ENCODE measurements at regions of chr10 and their contacts with region 1.

Region 1: DNA sequence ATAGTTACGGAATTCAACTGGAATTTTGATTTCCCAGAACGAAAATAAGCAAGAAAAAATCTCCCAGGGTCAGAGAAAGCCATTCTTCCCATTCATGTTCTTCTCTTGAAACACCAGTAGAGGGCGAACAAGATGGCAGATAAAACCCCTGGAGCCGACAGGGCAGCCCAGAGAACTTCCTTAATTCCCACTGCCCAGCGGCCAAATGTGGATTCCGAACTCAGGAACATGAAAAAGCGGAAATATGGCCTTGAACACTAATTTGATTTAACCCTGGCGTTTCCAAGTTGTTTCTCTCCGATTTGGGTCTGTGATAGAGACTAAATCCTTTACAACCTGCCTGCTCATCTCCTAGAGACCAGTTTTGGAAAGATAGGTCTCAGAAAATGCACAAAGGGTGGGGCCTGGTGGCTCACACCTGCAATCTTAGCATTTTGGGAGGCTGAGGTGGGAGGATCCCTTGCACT is 100.7 kb upstream of the WAC start:
- DNase-seq: peak; percentile 64
- ATAC-seq: peak; percentile 78
- H3K4me3 ChIP-seq: no peak overlapping the region
- H3K27ac ChIP-seq: no peak overlapping the region
- H3K4me1 ChIP-seq: no peaks in the 10 kb centered on the region
- H3K27me3 ChIP-seq: no peaks in the 10 kb centered on the region
- CTCF ChIP-seq: peak; percentile 80

Region 2: DNA sequence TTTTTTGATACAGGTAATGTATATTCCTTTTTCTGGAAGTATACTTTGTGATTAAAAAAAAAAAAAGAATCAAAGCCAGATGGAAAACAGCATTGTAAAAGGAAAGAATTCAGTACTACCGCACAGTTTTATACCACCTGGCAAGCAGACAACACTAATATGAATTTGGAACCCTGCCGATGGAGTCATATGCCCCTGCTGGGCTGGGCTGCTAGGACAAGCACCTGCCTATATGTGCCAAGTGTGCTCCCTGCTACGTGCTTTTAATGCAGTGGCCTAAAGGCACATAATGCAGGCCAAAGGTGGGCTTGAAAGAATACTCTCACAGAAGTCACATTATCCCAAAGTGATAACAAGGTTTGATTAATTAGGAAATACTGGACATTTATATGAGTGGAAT is 70.9 kb after region 1 on chr10:
- CTCF ChIA-PET with region 1: no interaction called
- POLR2A ChIA-PET with region 1: no interaction called
- intact Hi-C with region 1: loop called (anchors 2 kb)
- DNase-seq: peak; percentile 81
- ATAC-seq: peak; percentile 84
- H3K4me3 ChIP-seq: peak overlapping the region; percentile 76
- H3K27ac ChIP-seq: no peak overlapping the region
- H3K4me1 ChIP-seq: peaks cover 13% of the 10 kb centered on the region
- H3K27me3 ChIP-seq: no peaks in the 10 kb centered on the region
- CTCF ChIP-seq: no peak; the same call in 1 of the 2 replicates

Region 3: GRCh38 chr10:28532383-28533175 is 100.3 kb after region 1 on chr10 and contains the start of gene WAC:
- CTCF ChIA-PET with region 1: no interaction called
- POLR2A ChIA-PET with region 1: no interaction called
- intact Hi-C with region 1: loop called (anchors 2 kb)
- DNase-seq: peak; percentile 87
- ATAC-seq: peak; percentile 88
- H3K4me3 ChIP-seq: peak within 1 kb of the TSS; percentile 100
- H3K27ac ChIP-seq: peak within 1 kb of the TSS; percentile 94
- H3K4me1 ChIP-seq: peaks cover 17% of the 10 kb centered on the region
- H3K27me3 ChIP-seq: no peaks in the 10 kb centered on the region
- CTCF ChIP-seq: no peak
- total RNA-seq, gene WAC: 49.2 and 58.1 TPM in 2 replicates

Region 4: DNA sequence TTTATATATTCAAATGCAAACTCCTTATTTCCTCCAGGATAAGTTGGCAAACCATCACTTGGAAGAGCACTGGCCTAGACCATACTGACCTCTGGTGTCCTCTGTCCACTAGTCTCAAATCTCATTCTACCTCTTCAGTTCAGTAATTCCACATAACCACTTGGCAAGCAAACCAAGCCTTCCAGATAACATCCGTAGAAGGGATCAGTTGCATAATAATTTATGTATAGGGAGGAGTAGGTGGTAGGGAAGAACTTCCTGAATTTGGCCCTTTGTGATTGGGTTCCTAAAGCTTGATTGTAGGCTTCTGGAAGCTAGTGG is 155.7 kb after region 1 on chr10:
- CTCF ChIA-PET with region 1: no interaction called
- POLR2A ChIA-PET with region 1: no interaction called
- intact Hi-C with region 1: loop called (anchors 5 kb)
- DNase-seq: no peak
- ATAC-seq: 0 out of 2 replicates have a peak, but pooled peaks have one; percentile 18
- H3K4me3 ChIP-seq: no peak overlapping the region
- H3K27ac ChIP-seq: no peak overlapping the region
- H3K4me1 ChIP-seq: peaks cover 6% of the 10 kb centered on the region; the same call in 1 of the 2 replicates
- H3K27me3 ChIP-seq: no peaks in the 10 kb centered on the region
- CTCF ChIP-seq: no peak

Measured in PC-3 (cell line).